Right lobe of liver (tissue), 6 donors: ENCODE measurements at regions of chr16 and their contacts with region 1.

Region 1: GRCh38 chr16:10509534-10510025 is 70.8 kb downstream of the EMP2 start:
- DNase-seq: peak; percentile 49 to 88 (median 71)
- ATAC-seq: peak; percentile 94 to 96 (median 94)
- H3K4me3 ChIP-seq: peak overlapping the region in 1 of 3 donors; percentile 24
- H3K27ac ChIP-seq: peak overlapping the region in 2 of 3 donors; percentile 62 to 64
- H3K4me1 ChIP-seq: peaks cover 0 to 29% (median 5%) of the 10 kb centered on the region in 4 donors
- H3K27me3 ChIP-seq: no peaks in the 10 kb centered on the region
- CTCF ChIP-seq: peak; percentile 86 to 94 (median 88)
- POLR2A ChIP-seq: no peak

Region 2: DNA sequence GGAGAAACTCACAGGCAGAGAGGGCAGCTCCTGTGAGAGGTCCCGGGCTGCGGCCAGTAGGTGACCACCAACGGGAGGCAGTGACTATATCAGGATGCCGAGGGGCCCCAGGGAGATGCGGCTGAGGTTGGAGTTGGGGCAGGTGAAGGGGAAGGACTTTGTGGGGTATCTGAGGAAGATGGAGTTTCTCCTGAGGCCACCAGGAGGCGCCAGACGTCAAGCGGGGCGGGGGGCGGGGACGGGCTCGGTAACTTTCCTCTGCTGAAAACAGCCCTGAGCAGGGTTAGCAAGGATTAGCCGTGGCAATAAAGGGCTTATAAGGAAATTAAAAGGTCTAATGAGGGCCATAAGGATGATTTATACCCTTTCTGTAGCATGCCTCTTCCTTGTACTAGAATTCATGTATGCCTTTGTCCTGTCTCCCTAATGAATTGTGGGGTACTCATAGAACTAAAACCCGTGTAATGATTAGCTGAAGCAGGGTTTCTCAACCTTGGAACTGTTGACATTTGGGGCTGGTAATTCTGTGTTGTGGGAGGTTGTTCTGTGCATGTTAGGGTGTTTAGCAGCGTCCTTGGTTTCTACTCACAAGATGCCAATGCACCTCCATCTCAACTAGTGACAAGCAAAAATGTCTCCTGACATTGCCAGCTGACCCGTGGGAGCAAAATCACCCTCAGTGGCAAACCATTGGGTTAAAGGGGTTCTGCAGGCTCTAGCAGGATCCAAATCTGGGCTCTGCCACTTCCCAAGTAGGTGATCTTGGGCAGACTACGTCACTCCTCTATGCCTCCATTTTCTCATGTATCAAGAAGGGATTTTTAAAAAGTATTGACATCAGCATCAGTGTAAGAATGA is 252.6 kb before region 1 on chr16:
- intact Hi-C with region 1: loop called (anchors 5 to 10 kb)
- DNase-seq: peak; percentile 42 to 62 (median 61)
- ATAC-seq: peak; percentile 92 to 94 (median 94)
- H3K4me3 ChIP-seq: peak overlapping the region in 2 of 3 donors; percentile 27 to 31
- H3K27ac ChIP-seq: peak overlapping the region in 2 of 3 donors; percentile 73 to 79
- H3K4me1 ChIP-seq: peaks cover 0 to 20% (median 4%) of the 10 kb centered on the region in 4 donors
- H3K27me3 ChIP-seq: no peaks in the 10 kb centered on the region
- CTCF ChIP-seq: peak; percentile 61 to 75 (median 68)
- POLR2A ChIP-seq: no peak

Region 3: DNA sequence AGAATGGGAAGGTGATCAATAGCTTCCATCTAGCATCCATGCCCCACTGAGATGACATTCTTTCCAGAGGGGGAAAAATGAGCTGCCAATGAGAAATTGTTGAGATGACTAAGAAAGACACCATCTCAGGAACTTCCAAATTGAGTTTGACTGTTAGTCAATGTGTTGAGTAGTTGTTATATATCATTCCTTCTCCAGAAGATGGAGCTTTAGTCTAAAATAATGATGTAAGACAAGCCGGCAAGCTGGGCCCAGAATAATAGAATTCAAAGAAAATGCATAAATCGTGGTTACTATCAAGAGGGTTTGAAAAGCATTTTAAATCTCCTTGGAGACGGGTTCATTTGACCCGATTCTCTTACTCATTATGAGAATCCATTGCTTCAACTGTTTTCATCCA is 194.8 kb before region 1 on chr16:
- intact Hi-C with region 1: loop called (anchors 5 kb)
- DNase-seq: no peak
- ATAC-seq: peak; percentile 32 to 55 (median 52)
- H3K4me3 ChIP-seq: no peak overlapping the region
- H3K27ac ChIP-seq: peak overlapping the region in 1 of 3 donors; percentile 71
- H3K4me1 ChIP-seq: peaks cover 0 to 29% (median 11%) of the 10 kb centered on the region in 4 donors
- H3K27me3 ChIP-seq: no peaks in the 10 kb centered on the region
- CTCF ChIP-seq: peak; percentile 37 to 47 (median 42)
- POLR2A ChIP-seq: no peak

Region 4: DNA sequence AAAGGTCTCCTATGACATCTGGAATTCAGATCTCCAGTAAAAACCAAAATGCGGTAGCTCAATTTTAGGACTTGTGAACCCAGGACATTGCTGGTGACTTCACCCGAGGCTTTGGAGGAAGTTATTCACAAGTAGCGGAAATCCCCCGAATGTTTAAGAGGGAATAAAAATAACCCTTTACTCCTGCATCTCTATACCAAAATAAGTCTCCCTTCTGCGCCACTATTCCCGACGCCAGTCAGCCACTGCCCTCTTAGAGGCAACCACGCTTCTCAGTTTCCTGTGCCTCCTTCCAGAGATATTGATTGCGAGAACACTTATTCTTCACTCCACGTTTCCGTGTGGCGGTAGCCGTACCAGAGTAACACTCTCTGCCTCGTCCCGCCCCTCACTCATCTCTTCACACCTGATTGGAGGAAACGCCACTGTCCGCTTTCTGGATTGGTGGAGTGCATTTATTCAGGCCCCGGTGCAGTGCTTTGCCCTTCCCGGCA is 43.5 kb after region 1 on chr16:
- intact Hi-C with region 1: no loop called
- DNase-seq: peak in 1 of 3 donors; percentile 30
- ATAC-seq: peak; percentile 62 to 85 (median 66)
- H3K4me3 ChIP-seq: no peak overlapping the region
- H3K27ac ChIP-seq: no peak overlapping the region
- H3K4me1 ChIP-seq: peaks cover 0 to 16% (median 2%) of the 10 kb centered on the region in 4 donors
- H3K27me3 ChIP-seq: no peaks in the 10 kb centered on the region
- CTCF ChIP-seq: no peak
- POLR2A ChIP-seq: no peak

Region 5: DNA sequence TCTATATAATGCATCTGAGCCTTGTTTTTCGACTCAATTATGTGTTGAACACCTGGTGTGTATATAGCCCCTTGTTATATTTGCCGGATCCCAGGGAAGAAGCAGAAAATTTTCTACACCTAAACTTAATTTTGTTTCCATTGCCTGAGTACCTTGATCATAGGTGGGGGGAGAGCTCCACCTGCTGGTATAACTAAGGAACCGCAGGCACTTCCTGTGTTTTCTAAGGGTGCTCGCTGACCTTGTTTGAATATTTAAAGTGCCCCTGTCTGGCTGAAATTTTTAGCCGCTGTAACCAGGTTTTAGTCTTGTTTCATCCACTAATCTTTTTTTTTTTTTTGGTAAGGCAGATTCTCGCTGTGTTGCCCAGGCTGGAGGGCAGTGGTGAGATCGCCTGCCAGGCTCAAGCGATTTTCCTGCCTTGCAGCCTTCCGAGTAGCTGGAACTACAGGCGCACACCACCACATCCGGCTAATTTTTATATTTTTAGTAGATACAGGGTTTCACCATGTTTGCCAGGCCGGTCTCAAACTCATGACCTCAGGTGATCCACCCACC is 227.6 kb after region 1 on chr16:
- intact Hi-C with region 1: loop called in 1 of 2 experiments (anchors 5 kb)
- DNase-seq: peak in 1 of 3 donors; percentile 78
- ATAC-seq: peak; percentile 71 to 83 (median 76)
- H3K4me3 ChIP-seq: peak overlapping the region; percentile 26 to 32 (median 31)
- H3K27ac ChIP-seq: peak overlapping the region; percentile 74 to 90 (median 83)
- H3K4me1 ChIP-seq: peaks cover 0 to 26% (median 11%) of the 10 kb centered on the region in 4 donors
- H3K27me3 ChIP-seq: no peaks in the 10 kb centered on the region
- CTCF ChIP-seq: peak; percentile 90 to 98 (median 94)
- POLR2A ChIP-seq: no peak

Region 6: DNA sequence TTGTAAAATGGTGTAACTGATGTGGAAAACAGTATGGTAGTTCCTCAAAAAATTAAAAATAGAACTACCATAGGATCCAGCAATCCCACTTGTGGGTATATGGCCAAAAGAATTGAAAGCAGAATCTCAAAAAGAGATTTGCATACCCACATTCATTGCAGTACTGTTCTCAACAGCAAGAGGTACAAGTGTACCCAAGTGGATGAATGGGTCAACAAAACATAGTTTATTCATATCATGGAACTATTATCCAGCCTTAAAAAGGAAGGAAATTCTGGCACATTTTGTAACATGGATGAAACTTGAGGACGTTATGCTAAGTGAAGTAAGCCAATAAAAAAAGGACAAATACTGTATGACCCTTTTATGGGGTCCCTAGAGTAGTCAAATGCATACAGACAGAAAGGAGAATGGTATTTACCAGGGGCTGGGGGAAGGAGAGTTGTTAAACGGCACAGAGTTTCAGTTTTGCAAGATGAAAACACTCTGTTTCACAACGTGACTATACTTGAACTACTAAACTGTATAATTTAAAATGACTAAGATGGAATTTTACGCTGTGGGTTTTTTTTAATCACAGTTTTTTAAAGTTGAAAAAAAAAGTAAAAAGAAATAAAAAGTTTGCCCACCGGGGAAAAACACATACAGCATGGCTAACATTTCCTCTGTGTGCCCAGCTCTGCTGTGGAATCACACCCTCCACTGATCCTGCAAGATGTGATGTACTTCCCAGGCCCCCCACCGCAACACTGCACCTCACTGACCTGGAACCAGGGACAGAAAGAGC is 302.9 kb after region 1 on chr16:
- intact Hi-C with region 1: no loop called
- DNase-seq: no peak
- ATAC-seq: no peak
- H3K4me3 ChIP-seq: no peak overlapping the region
- H3K27ac ChIP-seq: no peak overlapping the region
- H3K4me1 ChIP-seq: no peaks in the 10 kb centered on the region
- H3K27me3 ChIP-seq: no peaks in the 10 kb centered on the region
- CTCF ChIP-seq: no peak
- POLR2A ChIP-seq: no peak